HCT116 (cell line): ENCODE measurements at regions of chr4 and their contacts with region 1.

Region 1: DNA sequence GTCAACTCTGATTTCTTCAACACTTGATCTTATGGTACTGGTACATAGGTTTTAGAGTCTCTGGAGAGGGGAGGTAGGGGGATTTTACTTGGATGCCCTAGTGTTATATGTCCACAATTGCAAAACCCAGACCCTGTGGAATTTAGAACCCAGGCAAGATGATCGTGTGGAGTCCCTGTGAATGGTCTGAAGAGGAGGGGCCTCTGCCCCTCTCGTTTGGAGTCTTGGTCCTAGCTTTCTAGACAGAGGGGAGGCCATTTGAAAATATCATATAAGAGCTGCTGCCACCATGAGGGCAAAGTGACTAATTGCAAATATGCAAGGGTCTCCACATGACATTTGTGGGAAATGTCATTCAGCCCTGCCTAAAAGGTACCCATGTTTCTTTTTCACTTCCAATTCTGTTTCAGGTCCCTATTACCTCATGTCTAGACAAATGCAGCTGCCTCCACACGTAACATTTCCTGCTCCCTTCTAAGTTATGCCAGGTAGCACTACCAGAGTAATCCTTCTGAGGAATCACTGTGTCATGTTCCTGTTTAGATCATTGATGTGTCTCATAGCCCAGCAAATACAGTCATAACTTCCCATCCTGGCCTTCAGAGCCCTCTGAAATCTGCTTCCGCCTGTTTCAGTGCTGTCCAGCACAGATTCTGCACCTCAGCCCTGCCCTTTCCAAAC is 126.8 kb downstream of the KLHL8 start:
- DNase-seq: peak; percentile 23
- ATAC-seq: peak; percentile 83
- H3K4me3 ChIP-seq: no peak overlapping the region
- H3K27ac ChIP-seq: peak overlapping the region; percentile 23; the same call in 1 of the 2 replicates
- H3K4me1 ChIP-seq: peaks cover 18 to 20% of the 10 kb centered on the region in 2 experiments
- H3K27me3 ChIP-seq: no peaks in the 10 kb centered on the region
- CTCF ChIP-seq: peak; percentile 43 to 66 (median 63); a peak in 4 of 6 replicates
- POLR2A ChIP-seq: no peak
- RAD21 ChIP-seq: peak; percentile 74

Region 2: DNA sequence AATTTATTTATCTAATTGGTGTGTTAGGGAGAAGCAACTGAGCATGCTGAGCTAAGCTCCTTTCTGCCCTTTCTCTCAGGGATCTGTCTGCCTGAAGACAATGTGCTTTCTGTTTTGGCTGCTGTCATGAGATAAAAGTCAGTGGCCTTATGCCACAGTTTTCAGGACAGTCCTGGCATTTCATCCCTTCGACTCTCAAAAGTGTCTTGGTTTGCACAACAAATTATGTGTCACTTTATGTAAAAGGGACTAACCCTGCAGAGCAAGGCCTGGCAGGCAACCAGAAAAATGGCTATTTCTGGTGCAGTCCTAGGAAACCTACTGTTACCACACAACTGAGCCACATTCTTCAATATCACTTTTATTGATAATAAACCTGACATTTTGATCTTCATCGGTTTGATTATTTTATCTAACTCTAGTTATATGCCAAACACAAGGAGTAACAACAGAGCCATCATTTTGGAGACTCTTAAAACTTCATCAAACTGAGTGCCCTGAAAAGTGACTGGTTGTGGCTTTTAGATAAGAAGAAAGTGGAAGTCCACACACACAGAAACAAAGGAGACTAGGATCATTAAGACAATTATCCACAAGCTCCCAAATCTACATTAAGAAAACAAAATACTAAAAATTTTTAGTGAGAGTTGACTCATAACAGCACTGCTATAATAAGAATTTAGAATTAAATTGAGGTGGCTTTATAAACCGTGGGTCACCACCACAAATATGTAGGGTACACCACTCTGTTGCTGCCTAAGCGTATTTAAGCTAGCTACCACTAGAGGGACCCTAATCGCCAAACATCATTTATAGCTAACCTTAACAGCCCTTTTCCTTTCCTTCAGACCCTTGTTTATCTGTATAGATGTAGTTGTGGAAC is 595.4 kb before region 1 on chr4:
- CTCF ChIA-PET with region 1: interaction called, 3 read pairs
- POLR2A ChIA-PET with region 1: no interaction called
- RAD21 ChIA-PET with region 1: no interaction called
- intact Hi-C with region 1: loop called (anchors 2 kb)
- DNase-seq: peak; percentile 47
- ATAC-seq: peak; percentile 97
- H3K4me3 ChIP-seq: no peak overlapping the region
- H3K27ac ChIP-seq: no peak overlapping the region
- H3K4me1 ChIP-seq: peaks cover 8% of the 10 kb centered on the region in 2 experiments; a peak in 3 of 4 replicates
- H3K27me3 ChIP-seq: no peaks in the 10 kb centered on the region
- CTCF ChIP-seq: peak; percentile 61 to 84 (median 80); a peak in 5 of 6 replicates
- POLR2A ChIP-seq: no peak
- RAD21 ChIP-seq: peak; percentile 72

Region 3: GRCh38 chr4:86837691-86838503 is 255.7 kb before region 1 on chr4:
- CTCF ChIA-PET with region 1: no interaction called
- POLR2A ChIA-PET with region 1: no interaction called
- RAD21 ChIA-PET with region 1: no interaction called
- intact Hi-C with region 1: no loop called
- DNase-seq: no peak
- ATAC-seq: no peak
- H3K4me3 ChIP-seq: no peak overlapping the region
- H3K27ac ChIP-seq: no peak overlapping the region
- H3K4me1 ChIP-seq: peaks cover 0 to 5% of the 10 kb centered on the region in 2 experiments; a peak in 1 of 4 replicates
- H3K27me3 ChIP-seq: no peaks in the 10 kb centered on the region
- CTCF ChIP-seq: no peak
- POLR2A ChIP-seq: no peak
- RAD21 ChIP-seq: no peak

Region 4: GRCh38 chr4:87006676-87007527 is 86.7 kb before region 1 on chr4:
- CTCF ChIA-PET with region 1: no interaction called
- POLR2A ChIA-PET with region 1: interaction called, 4 read pairs
- RAD21 ChIA-PET with region 1: interaction called in 1 of 2 experiments, 3 read pairs
- intact Hi-C with region 1: loop called (anchors 2 kb)
- DNase-seq: peak; percentile 86
- ATAC-seq: peak; percentile 91
- H3K4me3 ChIP-seq: peak overlapping the region; percentile 63 to 94
- H3K27ac ChIP-seq: peak overlapping the region; percentile 90
- H3K4me1 ChIP-seq: peaks cover 23 to 40% of the 10 kb centered on the region in 2 experiments
- H3K27me3 ChIP-seq: no peaks in the 10 kb centered on the region
- CTCF ChIP-seq: peak in 1 of 3 experiments; percentile 36; a peak in 3 of 6 replicates
- POLR2A ChIP-seq: peak; percentile 98
- RAD21 ChIP-seq: peak; percentile 37

Region 5: GRCh38 chr4:87058356-87059073 is 35.1 kb before region 1 on chr4:
- CTCF ChIA-PET with region 1: no interaction called
- POLR2A ChIA-PET with region 1: no interaction called
- RAD21 ChIA-PET with region 1: no interaction called
- intact Hi-C with region 1: no loop called
- DNase-seq: peak; percentile 29
- ATAC-seq: peak; percentile 47
- H3K4me3 ChIP-seq: no peak overlapping the region
- H3K27ac ChIP-seq: no peak overlapping the region
- H3K4me1 ChIP-seq: peaks cover 34 to 38% of the 10 kb centered on the region in 2 experiments
- H3K27me3 ChIP-seq: no peaks in the 10 kb centered on the region
- CTCF ChIP-seq: no peak
- POLR2A ChIP-seq: no peak
- RAD21 ChIP-seq: no peak

Region 6: DNA sequence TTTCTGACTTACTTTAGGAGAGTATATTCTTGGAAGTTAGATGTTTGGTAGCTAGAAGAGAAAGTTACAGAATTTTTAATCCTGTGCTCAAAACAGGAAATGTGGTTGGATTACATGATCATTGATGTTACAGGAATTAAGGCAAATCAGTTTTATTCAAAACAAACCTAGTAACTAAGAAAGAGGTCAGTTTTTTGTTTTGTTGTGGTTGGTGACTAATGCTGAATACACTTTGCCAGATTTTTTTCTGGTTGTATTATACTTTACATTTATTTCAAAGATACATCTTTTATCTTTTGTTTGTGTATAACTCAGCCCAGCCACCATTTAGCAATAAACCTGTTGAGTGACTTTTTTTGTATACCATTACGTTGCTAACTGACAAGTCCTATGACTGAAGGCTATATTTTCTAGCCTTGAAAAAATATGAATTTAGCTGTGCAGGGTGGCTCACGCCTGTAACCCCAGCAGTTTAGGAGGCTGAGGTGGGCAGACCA is 10.2 kb after region 1 on chr4:
- CTCF ChIA-PET with region 1: interaction called, 10 read pairs
- POLR2A ChIA-PET with region 1: no interaction called
- RAD21 ChIA-PET with region 1: interaction called in 1 of 2 experiments, 4 read pairs
- intact Hi-C with region 1: no loop called
- DNase-seq: peak; percentile 41
- ATAC-seq: peak; percentile 13; the same call in 1 of the 2 replicates
- H3K4me3 ChIP-seq: no peak overlapping the region
- H3K27ac ChIP-seq: peak overlapping the region; percentile 40
- H3K4me1 ChIP-seq: peaks cover 40 to 41% of the 10 kb centered on the region in 2 experiments
- H3K27me3 ChIP-seq: no peaks in the 10 kb centered on the region
- CTCF ChIP-seq: no peak
- POLR2A ChIP-seq: no peak
- RAD21 ChIP-seq: no peak